GM12878 (cell line): ENCODE measurements at regions of chr19 and their contacts with region 1.

Region 1: GRCh38 chr19:48588670-48589399 is 17.7 kb upstream of the SPACA4 start:
- DNase-seq: no peak
- ATAC-seq: peak; percentile 92
- H3K4me3 ChIP-seq: no peak overlapping the region
- H3K27ac ChIP-seq: no peak overlapping the region
- H3K4me1 ChIP-seq: peaks cover 4% of the 10 kb centered on the region
- H3K27me3 ChIP-seq: peaks cover 0 to 2% of the 10 kb centered on the region in 2 experiments; a peak in 1 of 4 replicates
- CTCF ChIP-seq: peak; percentile 93 to 97 (median 94)
- EP300 ChIP-seq: no peak
- POLR2A ChIP-seq: no peak
- RAD21 ChIP-seq: peak; percentile 51

Region 2: GRCh38 chr19:48271531-48272151 is 317.2 kb before region 1 on chr19:
- CTCF ChIA-PET with region 1: interaction called, 9 read pairs
- POLR2A ChIA-PET with region 1: no interaction called
- RAD21 ChIA-PET with region 1: interaction called, 4 read pairs
- SMC1A ChIA-PET with region 1: interaction called, 3 read pairs
- in situ Hi-C with region 1: no loop called
- intact Hi-C with region 1: loop called (anchors 1 kb)
- DNase-seq: no peak
- ATAC-seq: peak; percentile 69
- H3K4me3 ChIP-seq: peak overlapping the region; percentile 90
- H3K27ac ChIP-seq: peak overlapping the region; percentile 83
- H3K4me1 ChIP-seq: no peaks in the 10 kb centered on the region
- H3K27me3 ChIP-seq: no peaks in the 10 kb centered on the region; a peak in 1 of 4 replicates
- CTCF ChIP-seq: no peak
- EP300 ChIP-seq: no peak
- POLR2A ChIP-seq: peak; percentile 77
- RAD21 ChIP-seq: no peak

Region 3: GRCh38 chr19:48321622-48322591 is 266.9 kb before region 1 on chr19:
- CTCF ChIA-PET with region 1: interaction called, 14 read pairs
- POLR2A ChIA-PET with region 1: interaction called, 5 read pairs
- RAD21 ChIA-PET with region 1: interaction called, 12 read pairs
- SMC1A ChIA-PET with region 1: interaction called, 6 read pairs
- in situ Hi-C with region 1: loop called (anchors 5 kb)
- intact Hi-C with region 1: no loop called
- DNase-seq: peak; percentile 92
- ATAC-seq: peak; percentile 79
- H3K4me3 ChIP-seq: peak overlapping the region; percentile 73
- H3K27ac ChIP-seq: peak overlapping the region; percentile 96
- H3K4me1 ChIP-seq: peaks cover 31% of the 10 kb centered on the region
- H3K27me3 ChIP-seq: no peaks in the 10 kb centered on the region
- CTCF ChIP-seq: no peak
- EP300 ChIP-seq: peak; percentile 40 to 49; a peak in 2 of 4 replicates
- POLR2A ChIP-seq: peak; percentile 86
- RAD21 ChIP-seq: no peak

Region 4: DNA sequence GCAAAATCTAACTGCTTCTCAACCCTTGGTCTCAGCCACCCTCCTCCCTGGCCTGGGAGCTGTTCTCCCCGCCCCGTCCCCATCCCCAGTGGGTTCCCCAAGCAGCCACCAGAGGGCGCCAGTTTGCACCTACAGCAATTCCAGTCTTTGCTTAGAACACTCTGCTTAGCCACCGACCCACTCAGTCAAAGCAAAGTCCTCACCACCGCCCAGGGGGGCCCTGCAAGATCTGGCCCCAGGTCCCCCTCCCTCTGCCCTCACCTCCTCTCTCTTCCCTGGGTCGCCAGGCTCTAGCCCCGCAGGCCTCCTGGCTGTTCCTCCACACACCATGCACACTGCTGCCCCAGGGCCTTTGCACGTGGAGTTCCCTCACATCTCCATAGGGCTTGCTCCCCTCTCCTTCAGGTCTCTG is 237.5 kb before region 1 on chr19:
- CTCF ChIA-PET with region 1: interaction called, 21 read pairs
- POLR2A ChIA-PET with region 1: no interaction called
- RAD21 ChIA-PET with region 1: interaction called, 10 read pairs
- SMC1A ChIA-PET with region 1: interaction called, 8 read pairs
- in situ Hi-C with region 1: no loop called
- intact Hi-C with region 1: loop called (anchors 2 kb)
- DNase-seq: no peak
- ATAC-seq: peak; percentile 100
- H3K4me3 ChIP-seq: no peak overlapping the region
- H3K27ac ChIP-seq: no peak overlapping the region
- H3K4me1 ChIP-seq: no peaks in the 10 kb centered on the region
- H3K27me3 ChIP-seq: no peaks in the 10 kb centered on the region
- CTCF ChIP-seq: peak; percentile 71 to 93 (median 90)
- EP300 ChIP-seq: no peak
- POLR2A ChIP-seq: no peak
- RAD21 ChIP-seq: peak; percentile 61

Region 5: DNA sequence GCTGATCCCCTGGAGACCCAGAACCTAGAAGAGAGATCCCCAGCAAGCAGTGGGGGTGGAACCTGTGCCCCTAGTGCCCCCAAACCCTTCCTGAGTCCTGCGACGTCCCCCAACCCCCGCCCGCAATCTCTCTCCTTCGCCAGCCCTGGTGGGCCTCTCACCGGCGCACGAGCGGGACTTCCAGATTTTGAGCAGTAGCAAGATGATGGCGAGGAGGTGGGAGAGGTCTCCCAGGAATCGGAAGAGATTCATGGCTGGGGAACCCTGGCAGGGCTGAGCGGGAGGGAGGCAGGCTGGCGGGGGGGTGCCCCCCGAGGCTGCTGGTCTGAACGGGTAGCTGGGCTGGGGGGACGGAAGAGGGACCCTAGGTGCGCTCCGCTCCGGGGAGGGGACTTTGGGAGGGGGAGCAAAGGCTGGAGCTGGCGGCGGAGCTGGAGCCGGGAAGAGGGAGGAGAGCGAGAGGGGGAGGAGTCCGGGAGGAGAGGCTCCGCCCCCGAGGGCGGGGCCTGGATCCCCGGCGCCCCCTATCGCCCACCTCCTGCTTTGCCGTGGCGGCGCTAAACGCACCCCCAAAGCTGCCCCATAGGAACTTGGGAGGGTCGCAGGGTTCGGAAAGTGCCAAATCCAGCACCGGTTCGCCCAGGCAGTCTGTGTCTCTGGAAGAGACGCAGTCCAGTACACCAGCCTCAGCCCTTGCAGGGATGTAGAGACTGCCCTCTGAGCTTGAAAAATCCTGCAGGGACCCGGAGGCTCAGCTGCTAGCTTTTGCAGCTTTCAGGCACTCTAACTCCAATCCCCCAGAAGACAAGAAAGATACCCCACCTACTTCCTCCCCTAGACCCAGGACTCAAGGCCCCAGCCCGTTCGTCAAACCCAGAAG is 197.5 kb before region 1 on chr19 and contains the start of gene KDELR1:
- CTCF ChIA-PET with region 1: interaction called, 18 read pairs
- POLR2A ChIA-PET with region 1: interaction called, 3 read pairs
- RAD21 ChIA-PET with region 1: interaction called, 17 read pairs
- SMC1A ChIA-PET with region 1: no interaction called
- in situ Hi-C with region 1: no loop called
- intact Hi-C with region 1: no loop called
- DNase-seq: no peak
- ATAC-seq: peak; percentile 91
- H3K4me3 ChIP-seq: peak within 1 kb of the TSS; percentile 95
- H3K27ac ChIP-seq: peak within 1 kb of the TSS; percentile 75
- H3K4me1 ChIP-seq: peaks cover 5% of the 10 kb centered on the region; the same call in 1 of the 2 replicates
- H3K27me3 ChIP-seq: peaks cover 13 to 16% of the 10 kb centered on the region in 2 experiments
- CTCF ChIP-seq: peak; percentile 91 to 96 (median 95)
- EP300 ChIP-seq: no peak
- POLR2A ChIP-seq: peak; percentile 68; the same call in 1 of the 2 replicates
- RAD21 ChIP-seq: no peak
- polyA plus RNA-seq, gene KDELR1: 2.3 to 13.2 TPM

Region 6: DNA sequence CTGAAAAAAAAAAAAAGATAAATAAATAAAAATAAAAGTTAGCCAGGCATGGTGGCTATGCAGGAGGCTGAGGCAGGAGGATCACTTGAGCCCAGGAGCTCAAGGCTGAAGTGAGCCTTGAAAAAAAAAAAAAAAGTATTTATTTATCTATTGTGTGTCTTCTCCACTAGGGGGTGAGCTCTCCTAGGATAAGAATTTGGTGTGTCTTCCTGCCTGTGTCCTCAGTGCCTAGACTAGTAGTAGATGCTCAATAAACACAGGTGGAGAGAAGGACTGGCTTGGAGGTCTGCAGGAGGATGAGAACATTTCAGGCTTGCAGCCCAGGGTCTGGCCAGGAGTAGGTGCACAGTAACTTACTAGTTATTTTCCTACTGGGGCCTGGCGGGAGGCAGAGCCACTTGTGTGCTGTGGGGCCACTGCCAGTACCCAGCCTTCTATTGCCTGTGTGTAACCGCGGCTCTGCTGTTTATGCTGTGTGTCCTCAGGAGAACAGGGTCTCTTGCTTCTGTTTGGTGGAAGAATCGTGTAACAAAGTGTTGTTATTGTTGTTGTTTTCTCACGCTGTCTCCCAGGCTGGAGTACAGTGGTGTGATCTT is 82.6 kb before region 1 on chr19:
- CTCF ChIA-PET with region 1: interaction called, 131 read pairs
- POLR2A ChIA-PET with region 1: interaction called, 7 read pairs
- RAD21 ChIA-PET with region 1: interaction called, 69 read pairs
- SMC1A ChIA-PET with region 1: interaction called, 68 read pairs
- in situ Hi-C with region 1: loop called (anchors 5 kb)
- intact Hi-C with region 1: loop called (anchors 1 kb)
- DNase-seq: no peak
- ATAC-seq: peak; percentile 21
- H3K4me3 ChIP-seq: no peak overlapping the region
- H3K27ac ChIP-seq: no peak overlapping the region
- H3K4me1 ChIP-seq: peaks cover under 1% of the 10 kb centered on the region; the same call in 1 of the 2 replicates
- H3K27me3 ChIP-seq: no peaks in the 10 kb centered on the region; a peak in 1 of 4 replicates
- CTCF ChIP-seq: peak; percentile 39 to 57 (median 54)
- EP300 ChIP-seq: no peak
- POLR2A ChIP-seq: no peak
- RAD21 ChIP-seq: peak; percentile 83

Region 7: DNA sequence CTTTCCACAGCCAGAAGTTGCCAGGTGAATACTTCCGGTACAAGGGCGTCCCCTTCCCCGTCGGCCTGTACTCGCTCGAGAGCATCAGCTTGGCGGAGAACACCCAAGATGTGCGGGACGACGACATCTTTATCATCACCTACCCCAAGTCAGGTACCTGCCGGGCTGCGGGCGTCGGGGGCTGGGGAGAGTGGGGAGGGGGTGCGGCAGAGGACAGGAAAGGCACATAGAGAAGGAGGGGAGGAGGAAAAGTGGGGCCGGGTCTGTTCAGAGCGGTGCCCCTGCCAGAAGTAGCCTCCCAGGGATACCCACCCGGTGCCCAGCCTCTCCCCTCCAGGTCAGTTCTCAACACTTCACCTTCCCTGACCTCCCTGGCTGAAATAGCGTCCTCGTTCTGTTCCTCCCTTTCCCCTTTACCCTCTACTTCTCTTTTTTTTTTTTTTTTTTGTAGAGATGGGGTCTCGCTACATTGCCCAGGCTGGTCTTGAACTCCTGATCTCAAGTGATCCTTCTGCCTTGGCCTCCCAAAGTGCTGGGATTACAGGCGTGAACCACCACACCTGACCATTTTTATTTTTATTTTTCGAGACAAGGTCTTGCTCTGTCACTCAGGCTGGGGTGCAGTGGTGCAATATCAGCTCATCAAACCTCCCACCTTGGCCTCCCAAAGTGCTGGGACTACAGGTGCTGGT is 12.8 kb before region 1 on chr19:
- CTCF ChIA-PET with region 1: interaction called, 14 read pairs
- POLR2A ChIA-PET with region 1: no interaction called
- RAD21 ChIA-PET with region 1: interaction called, 4 read pairs
- SMC1A ChIA-PET with region 1: interaction called, 3 read pairs
- in situ Hi-C with region 1: no loop called
- intact Hi-C with region 1: no loop called
- DNase-seq: no peak
- ATAC-seq: no peak
- H3K4me3 ChIP-seq: no peak overlapping the region
- H3K27ac ChIP-seq: no peak overlapping the region
- H3K4me1 ChIP-seq: no peaks in the 10 kb centered on the region
- H3K27me3 ChIP-seq: no peaks in the 10 kb centered on the region
- CTCF ChIP-seq: no peak
- EP300 ChIP-seq: no peak
- POLR2A ChIP-seq: no peak
- RAD21 ChIP-seq: no peak